ENCODE measurements at regions of chr1 and their contacts with region 1.

Region 1: GRCh38 chr1:111481387-111482221 is 7.8 kb downstream of the C1orf162 start:
- DNase-seq: peak; percentile 59
- H3K4me3 ChIP-seq: no peak overlapping the region
- H3K27ac ChIP-seq: no peak overlapping the region
- H3K4me1 ChIP-seq: no peaks in the 10 kb centered on the region
- H3K27me3 ChIP-seq: no peaks in the 10 kb centered on the region
- CTCF ChIP-seq: peak; percentile 73 to 76

Region 2: GRCh38 chr1:111656086-111657017 is 174.7 kb after region 1 on chr1:
- CTCF ChIA-PET with region 1: no interaction called
- dilution Hi-C with region 1: no loop called
- in situ Hi-C with region 1: no loop called
- intact Hi-C with region 1: loop called (anchors 1 kb)
- DNase-seq: peak; percentile 27
- H3K4me3 ChIP-seq: no peak overlapping the region
- H3K27ac ChIP-seq: no peak overlapping the region
- H3K4me1 ChIP-seq: no peaks in the 10 kb centered on the region
- H3K27me3 ChIP-seq: no peaks in the 10 kb centered on the region
- CTCF ChIP-seq: peak; percentile 52 to 65

Region 3: DNA sequence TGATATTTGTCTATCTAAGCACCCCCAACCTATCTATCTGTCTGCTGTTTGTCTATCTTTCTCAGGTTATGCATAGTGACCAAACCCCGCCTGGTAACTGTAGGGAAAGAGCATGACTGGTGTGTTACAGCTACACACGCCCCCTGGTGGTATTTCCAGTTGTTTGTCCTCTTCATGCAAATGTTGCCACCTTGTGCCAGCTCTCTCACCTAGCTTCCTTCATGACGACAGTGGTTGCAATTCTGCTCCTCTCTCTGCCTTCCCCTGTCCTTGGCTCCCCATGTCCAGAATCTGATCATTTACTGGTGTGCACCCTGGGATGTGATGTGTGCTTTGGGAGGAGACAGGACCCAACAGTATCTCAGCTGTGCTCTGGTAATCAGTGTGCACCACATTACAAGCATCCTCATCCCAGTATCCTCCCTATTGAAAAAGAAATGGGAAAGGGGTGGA is 265.7 kb after region 1 on chr1:
- CTCF ChIA-PET with region 1: no interaction called
- dilution Hi-C with region 1: no loop called
- in situ Hi-C with region 1: no loop called
- intact Hi-C with region 1: loop called (anchors 1 kb)
- DNase-seq: peak; percentile 65
- H3K4me3 ChIP-seq: no peak overlapping the region
- H3K27ac ChIP-seq: no peak overlapping the region
- H3K4me1 ChIP-seq: no peaks in the 10 kb centered on the region
- H3K27me3 ChIP-seq: no peaks in the 10 kb centered on the region
- CTCF ChIP-seq: peak; percentile 74 to 81

Region 4: DNA sequence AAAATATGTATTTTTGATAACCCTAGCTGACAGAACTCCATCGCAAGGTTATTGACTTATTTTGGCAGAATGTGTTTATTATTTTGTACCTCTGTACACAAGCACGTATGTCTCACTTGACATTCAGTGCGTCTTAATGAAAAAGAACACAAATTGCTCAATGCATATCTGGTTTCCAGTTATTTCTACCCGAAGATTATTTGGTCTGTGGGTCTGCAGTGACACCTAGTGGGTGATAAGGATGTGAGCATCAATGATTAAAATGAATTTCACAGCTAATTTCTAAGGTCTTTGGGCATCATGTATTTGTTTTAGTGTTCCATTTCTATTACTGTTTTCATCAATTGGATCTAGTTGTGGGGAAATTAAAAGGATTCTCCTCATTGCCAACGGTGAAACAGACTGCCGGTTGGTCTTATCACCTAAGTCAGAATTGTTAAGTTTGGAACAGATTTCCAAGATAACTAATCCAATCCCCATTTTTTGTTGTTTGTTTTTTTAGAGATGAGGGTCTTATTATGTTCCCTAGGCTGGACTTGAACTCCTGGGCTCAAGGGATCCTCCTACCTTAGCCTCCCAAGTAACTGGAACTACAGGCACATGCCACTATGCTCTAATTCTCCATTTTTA is 288.0 kb after region 1 on chr1:
- CTCF ChIA-PET with region 1: interaction called, 29 read pairs
- dilution Hi-C with region 1: no loop called
- in situ Hi-C with region 1: no loop called
- intact Hi-C with region 1: loop called (anchors 1 kb)
- DNase-seq: peak; percentile 42
- H3K4me3 ChIP-seq: no peak overlapping the region
- H3K27ac ChIP-seq: no peak overlapping the region
- H3K4me1 ChIP-seq: no peaks in the 10 kb centered on the region
- H3K27me3 ChIP-seq: no peaks in the 10 kb centered on the region
- CTCF ChIP-seq: peak; percentile 74 to 84

Region 5: GRCh38 chr1:112105557-112105956 is 624.0 kb after region 1 on chr1:
- CTCF ChIA-PET with region 1: no interaction called
- dilution Hi-C with region 1: no loop called
- in situ Hi-C with region 1: no loop called
- intact Hi-C with region 1: no loop called
- DNase-seq: no peak
- H3K4me3 ChIP-seq: no peak overlapping the region
- H3K27ac ChIP-seq: no peak overlapping the region
- H3K4me1 ChIP-seq: no peaks in the 10 kb centered on the region
- H3K27me3 ChIP-seq: no peaks in the 10 kb centered on the region
- CTCF ChIP-seq: no peak

Region 6: GRCh38 chr1:112369392-112370285 is 888.0 kb after region 1 on chr1:
- CTCF ChIA-PET with region 1: no interaction called
- dilution Hi-C with region 1: no loop called
- in situ Hi-C with region 1: no loop called
- intact Hi-C with region 1: loop called (anchors 10 kb)
- DNase-seq: peak; percentile 73
- H3K4me3 ChIP-seq: no peak overlapping the region
- H3K27ac ChIP-seq: no peak overlapping the region
- H3K4me1 ChIP-seq: no peaks in the 10 kb centered on the region
- H3K27me3 ChIP-seq: no peaks in the 10 kb centered on the region
- CTCF ChIP-seq: peak; percentile 97 to 99